ENCODE measurements at regions of chr3 and their contacts with region 1.

Region 1: GRCh38 chr3:20225769-20226168 is 39.8 kb upstream of the SGO1 start:
- DNase-seq: no peak
- ATAC-seq: no peak
- H3K4me3 Mint-ChIP-seq: no peak overlapping the region
- H3K27ac Mint-ChIP-seq: no peak overlapping the region
- H3K4me1 Mint-ChIP-seq: no peaks in the 10 kb centered on the region
- H3K27me3 Mint-ChIP-seq: no peaks in the 10 kb centered on the region
- CTCF ChIP-seq: no peak

Region 2: GRCh38 chr3:20739814-20740213 is 514.0 kb after region 1 on chr3:
- CTCF ChIA-PET with region 1: no interaction called
- POLR2A ChIA-PET with region 1: no interaction called
- intact Hi-C with region 1: loop called (anchors 5 kb)
- DNase-seq: no peak
- ATAC-seq: no peak
- H3K4me3 Mint-ChIP-seq: no peak overlapping the region
- H3K27ac Mint-ChIP-seq: no peak overlapping the region
- H3K4me1 Mint-ChIP-seq: no peaks in the 10 kb centered on the region
- H3K27me3 Mint-ChIP-seq: no peaks in the 10 kb centered on the region
- CTCF ChIP-seq: no peak

Region 3: DNA sequence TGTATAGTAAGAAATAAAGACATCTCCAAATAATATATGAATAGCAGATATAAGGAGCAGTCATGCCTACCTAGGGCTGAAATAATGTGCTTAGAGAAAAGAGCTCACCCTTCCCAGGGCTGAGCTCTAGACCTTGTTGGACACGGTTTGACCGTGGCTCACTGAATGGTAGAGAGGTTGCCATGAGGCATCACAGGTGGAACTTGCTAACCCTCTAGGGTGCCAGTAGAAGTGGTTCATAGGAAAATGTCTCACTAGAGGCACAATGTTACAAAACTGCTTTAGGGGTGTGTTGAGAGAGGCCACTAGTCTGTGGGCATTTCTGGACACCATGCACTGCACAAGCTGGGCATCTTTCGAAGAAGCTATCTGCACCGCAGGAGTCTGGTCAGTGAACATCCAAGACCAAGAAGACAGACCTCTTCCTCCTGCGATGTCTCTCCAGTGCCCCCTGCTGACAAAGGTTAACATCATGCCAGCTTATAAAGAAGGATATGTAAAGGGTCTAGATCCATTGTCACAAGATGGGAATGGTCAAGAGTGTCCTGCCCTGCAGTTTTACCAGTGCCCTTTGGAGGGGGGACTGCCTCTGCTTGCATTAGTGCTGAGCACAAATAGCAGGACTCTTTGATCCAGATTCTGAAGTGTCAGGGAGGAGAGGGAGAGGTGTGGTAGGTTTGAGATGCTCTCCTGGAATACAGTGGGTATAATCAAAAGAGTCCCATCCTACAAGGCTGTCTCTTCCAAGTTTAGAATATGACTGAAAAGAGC is 1258.5 kb after region 1 on chr3:
- CTCF ChIA-PET with region 1: no interaction called
- POLR2A ChIA-PET with region 1: no interaction called
- intact Hi-C with region 1: loop called (anchors 5 kb)
- DNase-seq: no peak
- ATAC-seq: no peak
- H3K4me3 Mint-ChIP-seq: no peak overlapping the region
- H3K27ac Mint-ChIP-seq: no peak overlapping the region
- H3K4me1 Mint-ChIP-seq: no peaks in the 10 kb centered on the region
- H3K27me3 Mint-ChIP-seq: no peaks in the 10 kb centered on the region
- CTCF ChIP-seq: no peak

Region 4: GRCh38 chr3:22117751-22118346 is 1892.1 kb after region 1 on chr3:
- CTCF ChIA-PET with region 1: no interaction called
- POLR2A ChIA-PET with region 1: no interaction called
- intact Hi-C with region 1: loop called (anchors 5 kb)
- DNase-seq: no peak
- ATAC-seq: no peak
- H3K4me3 Mint-ChIP-seq: no peak overlapping the region
- H3K27ac Mint-ChIP-seq: no peak overlapping the region
- H3K4me1 Mint-ChIP-seq: no peaks in the 10 kb centered on the region
- H3K27me3 Mint-ChIP-seq: no peaks in the 10 kb centered on the region
- CTCF ChIP-seq: no peak

Measured in activated B cell treated with CpG ODN at 0.5 μM for 24 hours (primary cell).